Colonic mucosa (tissue), 4 donors: ENCODE measurements at regions of chr15 and their contacts with region 1.

Region 1: DNA sequence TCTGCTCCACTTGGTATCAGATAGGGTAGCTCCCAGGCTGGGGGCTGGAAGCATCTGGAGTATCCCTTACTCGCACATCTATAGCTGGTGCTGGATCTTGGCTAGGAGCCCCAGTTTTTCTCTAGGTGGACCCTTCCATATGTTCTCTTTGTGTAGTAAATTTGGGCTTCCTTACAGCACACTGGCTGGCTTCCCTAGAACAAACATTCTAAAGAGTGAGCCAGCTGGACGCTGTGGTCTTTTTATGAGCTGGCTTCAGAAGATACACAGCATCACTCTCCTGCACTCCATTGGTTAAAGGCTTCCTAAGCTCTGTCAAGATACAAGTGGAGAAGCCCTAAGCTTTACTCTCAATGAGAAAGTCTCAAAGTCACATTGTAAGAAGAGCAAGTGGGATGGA is 322.1 kb downstream of the WDR72 start:
- DNase-seq: no peak
- H3K4me3 ChIP-seq: no peak overlapping the region
- H3K27ac ChIP-seq: no peak overlapping the region
- H3K4me1 ChIP-seq: no peaks in the 10 kb centered on the region
- H3K27me3 ChIP-seq: no peaks in the 10 kb centered on the region
- CTCF ChIP-seq: no peak

Region 2: DNA sequence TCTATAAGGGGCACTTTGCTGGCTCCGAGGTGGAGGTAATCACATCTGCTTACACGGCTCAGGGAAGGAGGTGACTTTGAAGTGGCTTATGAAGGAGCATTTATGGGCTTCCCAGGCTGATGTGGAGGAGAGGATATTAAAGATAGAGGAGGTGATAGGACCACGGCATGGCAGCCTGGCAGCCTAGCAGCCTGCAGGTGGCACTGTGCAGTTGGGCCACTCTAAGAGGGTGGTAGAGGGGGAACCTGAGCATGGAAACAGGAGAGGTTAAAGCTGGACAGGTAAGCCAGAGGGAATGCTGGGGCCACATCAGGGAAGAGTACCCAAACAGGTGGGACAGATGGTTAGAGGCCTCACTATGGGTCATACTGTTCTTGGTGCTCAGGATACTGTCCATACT is 52.9 kb before region 1 on chr15:
- intact Hi-C with region 1: loop called (anchors 10 kb)
- DNase-seq: peak; percentile 24
- H3K4me3 ChIP-seq: no peak overlapping the region
- H3K27ac ChIP-seq: no peak overlapping the region
- H3K4me1 ChIP-seq: no peaks in the 10 kb centered on the region
- H3K27me3 ChIP-seq: no peaks in the 10 kb centered on the region
- CTCF ChIP-seq: no peak

Region 3: DNA sequence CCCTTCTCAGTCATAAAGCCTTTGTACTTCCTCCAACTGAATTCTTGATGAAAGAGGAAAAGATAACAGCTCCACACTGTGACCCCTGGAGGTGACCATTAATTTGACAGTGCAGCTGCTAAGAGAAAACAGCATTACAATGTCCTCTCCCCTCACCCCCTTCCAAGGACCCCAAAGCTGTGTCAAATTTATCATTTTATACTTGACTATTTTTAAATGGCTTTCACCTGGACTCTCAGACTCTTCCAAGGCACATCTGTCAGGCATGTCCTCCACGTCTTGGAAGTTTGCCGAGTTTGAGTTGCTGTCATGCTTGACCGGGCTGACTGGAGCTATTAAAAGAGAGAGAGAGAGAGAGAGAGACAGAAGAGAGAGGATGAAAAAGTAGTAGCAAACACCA is 85.6 kb after region 1 on chr15:
- intact Hi-C with region 1: no loop called
- DNase-seq: no peak
- H3K4me3 ChIP-seq: no peak overlapping the region
- H3K27ac ChIP-seq: no peak overlapping the region
- H3K4me1 ChIP-seq: no peaks in the 10 kb centered on the region
- H3K27me3 ChIP-seq: no peaks in the 10 kb centered on the region
- CTCF ChIP-seq: no peak